GM12878 (cell line): ENCODE measurements at regions of chr12 and their contacts with region 1.

Region 1: DNA sequence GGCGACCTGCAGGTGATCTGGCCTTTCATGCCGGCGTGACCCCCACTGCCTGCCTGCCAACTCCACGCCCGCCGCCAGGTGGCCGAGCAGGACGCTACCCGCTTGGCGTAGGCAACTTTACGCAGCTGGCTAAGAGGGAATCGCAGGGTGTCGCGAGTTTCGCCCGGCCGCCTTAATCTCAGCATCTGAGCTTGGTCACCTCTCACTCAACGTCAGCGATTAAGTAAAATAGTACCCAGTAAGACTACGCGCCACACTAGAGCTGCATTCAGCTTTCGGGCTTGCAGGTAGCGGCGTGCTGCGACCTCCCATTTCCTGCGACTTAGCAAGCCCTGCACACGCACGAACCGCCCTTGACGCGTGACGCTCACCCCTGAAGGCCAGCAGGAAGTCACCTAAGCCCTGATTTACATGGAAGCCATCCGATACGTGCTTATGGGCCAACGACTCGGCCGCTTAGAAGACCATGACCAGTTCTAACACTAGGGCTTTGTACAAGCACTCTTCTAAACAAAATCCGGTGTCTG is 33.2 kb downstream of the WBP11 start:
- DNase-seq: peak; percentile 84
- ATAC-seq: peak; percentile 63
- H3K4me3 ChIP-seq: peak overlapping the region; percentile 83
- H3K27ac ChIP-seq: peak overlapping the region; percentile 99
- H3K4me1 ChIP-seq: peaks cover 2% of the 10 kb centered on the region
- H3K27me3 ChIP-seq: no peaks in the 10 kb centered on the region
- CTCF ChIP-seq: peak; percentile 81 to 87 (median 87)
- EP300 ChIP-seq: peak; percentile 11 to 58; a peak in 3 of 4 replicates
- POLR2A ChIP-seq: peak; percentile 89
- RAD21 ChIP-seq: peak; percentile 37; the same call in 1 of the 2 replicates

Region 2: DNA sequence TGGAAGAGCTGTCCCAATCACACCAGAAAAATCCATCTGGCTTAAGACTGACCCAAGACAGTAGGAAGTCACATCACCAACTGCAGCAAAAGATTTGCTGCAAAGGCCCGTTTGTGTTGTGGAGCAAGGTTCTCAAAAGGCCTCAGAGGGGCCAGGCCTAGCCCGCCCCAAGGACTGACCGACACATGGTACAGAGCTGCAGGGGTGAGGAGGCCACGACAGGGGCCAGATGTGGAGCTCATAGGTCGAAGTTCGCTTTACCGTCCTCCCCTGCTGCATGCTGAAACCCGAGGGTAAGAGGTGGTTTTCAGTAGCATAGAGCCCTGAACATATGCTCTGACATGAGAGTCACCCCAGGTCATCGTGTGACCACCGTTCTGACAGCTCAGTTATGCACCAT is 237.9 kb before region 1 on chr12:
- CTCF ChIA-PET with region 1: no interaction called
- POLR2A ChIA-PET with region 1: no interaction called
- RAD21 ChIA-PET with region 1: no interaction called
- SMC1A ChIA-PET with region 1: no interaction called
- in situ Hi-C with region 1: no loop called
- intact Hi-C with region 1: no loop called
- DNase-seq: no peak
- ATAC-seq: no peak
- H3K4me3 ChIP-seq: no peak overlapping the region
- H3K27ac ChIP-seq: no peak overlapping the region
- H3K4me1 ChIP-seq: no peaks in the 10 kb centered on the region
- H3K27me3 ChIP-seq: no peaks in the 10 kb centered on the region
- CTCF ChIP-seq: no peak
- EP300 ChIP-seq: no peak
- POLR2A ChIP-seq: no peak
- RAD21 ChIP-seq: no peak

Region 3: DNA sequence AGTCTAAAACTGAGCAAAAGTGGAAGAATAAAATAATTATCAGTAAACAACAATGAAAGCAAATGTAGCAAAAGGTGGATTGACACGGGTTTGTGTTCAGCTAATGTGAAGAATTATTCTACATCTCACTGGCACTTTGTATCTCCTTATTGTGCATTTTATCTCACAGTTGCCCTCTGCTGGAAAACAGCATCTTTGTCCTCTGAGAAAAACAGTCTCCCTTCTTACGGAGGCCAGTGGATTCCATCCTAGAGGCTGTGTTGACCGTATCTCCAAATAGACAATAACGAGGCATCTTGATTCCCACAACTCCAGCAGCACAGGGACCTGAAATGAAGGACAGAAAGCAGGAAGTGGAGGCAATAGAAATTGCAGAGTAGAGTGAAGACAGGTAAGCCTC is 151.0 kb before region 1 on chr12:
- CTCF ChIA-PET with region 1: interaction called, 6 read pairs
- POLR2A ChIA-PET with region 1: no interaction called
- RAD21 ChIA-PET with region 1: no interaction called
- SMC1A ChIA-PET with region 1: no interaction called
- in situ Hi-C with region 1: no loop called
- intact Hi-C with region 1: loop called (anchors 5 kb)
- DNase-seq: no peak
- ATAC-seq: no peak
- H3K4me3 ChIP-seq: no peak overlapping the region
- H3K27ac ChIP-seq: no peak overlapping the region
- H3K4me1 ChIP-seq: peaks cover 23% of the 10 kb centered on the region
- H3K27me3 ChIP-seq: no peaks in the 10 kb centered on the region
- CTCF ChIP-seq: 0 out of 6 replicates have a peak, but pooled peaks of 1 of the 3 experiments have one; percentile 16
- EP300 ChIP-seq: no peak
- POLR2A ChIP-seq: no peak
- RAD21 ChIP-seq: peak; percentile 48

Region 4: DNA sequence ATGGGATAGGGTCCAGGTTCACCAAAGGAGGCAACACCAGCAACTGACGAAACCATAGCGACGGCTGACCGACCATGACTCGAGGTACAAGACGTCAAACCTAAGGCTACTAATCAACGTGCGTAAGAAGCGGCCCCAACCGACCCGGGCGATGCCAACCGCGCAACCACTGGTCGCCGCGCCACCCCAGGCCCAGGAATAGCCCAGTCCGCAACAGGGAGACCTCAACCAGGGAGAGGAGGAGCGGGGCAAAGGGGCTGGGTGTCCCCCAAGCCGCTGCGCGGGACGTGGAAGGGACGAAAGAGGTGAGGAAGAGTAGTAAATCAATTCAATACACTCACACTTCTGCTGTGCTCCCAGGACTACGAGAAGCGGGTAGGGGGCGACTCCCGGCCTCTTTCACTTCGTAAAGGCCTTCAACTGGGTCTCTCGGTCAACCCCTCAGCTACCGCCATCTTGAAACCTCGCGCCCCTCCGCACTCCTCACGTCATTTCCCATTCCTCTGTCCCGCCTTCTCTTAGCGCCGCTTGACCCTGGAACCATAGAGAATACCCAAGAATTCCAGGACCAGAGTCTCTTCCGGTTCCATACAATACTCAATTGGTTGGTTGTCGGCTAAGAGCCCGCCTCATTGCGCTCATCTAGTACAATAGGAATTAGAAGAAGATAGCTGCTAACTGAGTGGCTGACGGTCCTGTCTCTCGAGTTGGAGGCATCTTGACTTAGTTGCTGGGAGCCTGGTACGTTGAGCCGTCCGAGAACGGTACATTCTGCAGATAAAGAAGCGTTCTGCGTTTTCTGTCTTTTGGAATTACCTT is 33.2 kb after region 1 on chr12 and contains the starts of genes C12orf60 and WBP11:
- CTCF ChIA-PET with region 1: interaction called, 38 read pairs
- POLR2A ChIA-PET with region 1: interaction called, 41 read pairs
- RAD21 ChIA-PET with region 1: interaction called, 89 read pairs
- SMC1A ChIA-PET with region 1: interaction called, 52 read pairs
- in situ Hi-C with region 1: no loop called
- intact Hi-C with region 1: loop called (anchors 2 kb)
- DNase-seq: peak; percentile 98
- ATAC-seq: peak; percentile 99
- H3K4me3 ChIP-seq: peak within 1 kb of the TSS; percentile 98
- H3K27ac ChIP-seq: peak within 1 kb of the TSS; percentile 86
- H3K4me1 ChIP-seq: peaks cover 3% of the 10 kb centered on the region; the same call in 1 of the 2 replicates
- H3K27me3 ChIP-seq: no peaks in the 10 kb centered on the region
- CTCF ChIP-seq: no peak
- EP300 ChIP-seq: no peak
- POLR2A ChIP-seq: peak; percentile 80
- RAD21 ChIP-seq: no peak
- polyA plus RNA-seq, gene C12orf60: 5.7 to 7.2 TPM
- polyA plus RNA-seq, gene WBP11: 17.5 to 18.9 TPM

Region 5: GRCh38 chr12:15882118-15882971 is 1112.3 kb after region 1 on chr12 and contains the start of gene STRAP:
- CTCF ChIA-PET with region 1: no interaction called
- POLR2A ChIA-PET with region 1: no interaction called
- RAD21 ChIA-PET with region 1: no interaction called
- SMC1A ChIA-PET with region 1: no interaction called
- in situ Hi-C with region 1: loop called (anchors 25 kb)
- intact Hi-C with region 1: loop called (anchors 5 kb)
- DNase-seq: peak; percentile 88
- ATAC-seq: peak; percentile 93
- H3K4me3 ChIP-seq: peak within 1 kb of the TSS; percentile 97
- H3K27ac ChIP-seq: peak within 1 kb of the TSS; percentile 90
- H3K4me1 ChIP-seq: peaks cover 4% of the 10 kb centered on the region; the same call in 1 of the 2 replicates
- H3K27me3 ChIP-seq: no peaks in the 10 kb centered on the region
- CTCF ChIP-seq: no peak
- EP300 ChIP-seq: no peak
- POLR2A ChIP-seq: peak; percentile 94
- RAD21 ChIP-seq: no peak
- polyA plus RNA-seq, gene STRAP: 102 to 227 TPM